Keratinocyte (primary cell): ENCODE measurements at regions of chr3 and their contacts with region 1.

Region 1: GRCh38 chr3:98778852-98779413 is 15.8 kb downstream of the ST3GAL6 start:
- DNase-seq: peak; percentile 54
- H3K4me3 ChIP-seq: peak overlapping the region in 2 of 3 experiments; percentile 30 to 35
- H3K27ac ChIP-seq: peak overlapping the region; percentile 82
- H3K4me1 ChIP-seq: peaks cover 35% of the 10 kb centered on the region
- H3K27me3 ChIP-seq: no peaks in the 10 kb centered on the region
- CTCF ChIP-seq: no peak

Region 2: GRCh38 chr3:98602078-98602678 is 176.8 kb before region 1 on chr3:
- dilution Hi-C with region 1: loop called (anchors 25 kb)
- DNase-seq: no peak
- H3K4me3 ChIP-seq: no peak overlapping the region
- H3K27ac ChIP-seq: no peak overlapping the region
- H3K4me1 ChIP-seq: no peaks in the 10 kb centered on the region
- H3K27me3 ChIP-seq: no peaks in the 10 kb centered on the region
- CTCF ChIP-seq: peak; percentile 48 to 69 (median 68)

Region 3: DNA sequence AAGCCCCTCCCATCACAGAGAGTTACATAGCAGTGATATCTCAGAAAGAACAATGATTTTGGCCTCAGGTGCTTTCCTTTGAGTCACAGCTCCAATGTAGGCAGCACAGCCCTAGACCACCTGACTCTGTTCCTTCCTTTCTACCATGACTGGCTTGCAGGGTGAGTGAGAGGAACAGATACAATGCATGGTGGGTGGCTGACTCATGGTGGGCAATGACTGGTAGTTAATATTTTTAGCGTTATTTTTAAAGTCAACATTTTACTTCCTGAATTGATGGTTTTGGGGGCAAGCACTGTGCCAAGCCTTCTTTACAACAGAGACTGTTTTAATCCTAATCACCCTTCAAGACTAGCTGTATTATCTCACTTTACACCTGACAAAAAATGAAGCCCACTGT is 48.6 kb before region 1 on chr3:
- dilution Hi-C with region 1: no loop called
- DNase-seq: peak; percentile 28
- H3K4me3 ChIP-seq: no peak overlapping the region
- H3K27ac ChIP-seq: peak overlapping the region; percentile 48
- H3K4me1 ChIP-seq: peaks cover 24% of the 10 kb centered on the region
- H3K27me3 ChIP-seq: no peaks in the 10 kb centered on the region
- CTCF ChIP-seq: no peak